GM12878 (cell line): ENCODE measurements at regions of chr3 and their contacts with region 1.

Region 1: DNA sequence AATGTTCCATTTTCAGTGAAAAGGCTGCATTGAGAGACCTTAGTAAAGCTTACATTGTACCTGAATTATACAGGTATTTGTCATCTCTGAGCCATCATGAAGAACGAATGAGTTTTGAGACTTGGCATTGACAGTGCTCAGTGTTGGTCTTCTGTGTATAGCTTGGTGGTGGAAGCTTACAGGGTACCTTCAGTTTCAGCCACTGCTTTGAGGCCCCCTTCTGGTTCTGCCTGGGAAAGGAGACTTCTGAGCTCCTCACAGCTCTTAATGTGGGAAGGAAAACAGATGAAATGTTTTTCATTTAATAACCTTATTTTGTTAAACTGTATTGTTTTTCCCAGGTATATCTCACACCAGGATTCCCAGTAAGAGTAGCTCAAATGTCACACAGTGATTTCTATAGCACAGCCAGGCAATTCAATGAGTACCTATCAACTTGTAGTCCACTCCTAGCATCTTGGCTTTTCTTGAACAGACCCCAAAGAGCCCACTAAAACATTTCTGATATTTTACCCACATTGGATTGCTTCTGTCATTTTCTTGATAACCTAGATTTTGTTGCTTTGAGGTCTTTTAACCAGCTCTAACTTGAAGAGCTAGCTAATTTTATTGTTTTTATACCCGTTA is 5.6 kb downstream of the SERPINI1 start:
- DNase-seq: no peak
- ATAC-seq: peak; percentile 97
- H3K4me3 ChIP-seq: no peak overlapping the region
- H3K27ac ChIP-seq: no peak overlapping the region
- H3K4me1 ChIP-seq: no peaks in the 10 kb centered on the region
- H3K27me3 ChIP-seq: no peaks in the 10 kb centered on the region
- CTCF ChIP-seq: peak; percentile 60 to 71 (median 69)
- EP300 ChIP-seq: no peak
- POLR2A ChIP-seq: no peak
- RAD21 ChIP-seq: peak; percentile 65

Region 2: DNA sequence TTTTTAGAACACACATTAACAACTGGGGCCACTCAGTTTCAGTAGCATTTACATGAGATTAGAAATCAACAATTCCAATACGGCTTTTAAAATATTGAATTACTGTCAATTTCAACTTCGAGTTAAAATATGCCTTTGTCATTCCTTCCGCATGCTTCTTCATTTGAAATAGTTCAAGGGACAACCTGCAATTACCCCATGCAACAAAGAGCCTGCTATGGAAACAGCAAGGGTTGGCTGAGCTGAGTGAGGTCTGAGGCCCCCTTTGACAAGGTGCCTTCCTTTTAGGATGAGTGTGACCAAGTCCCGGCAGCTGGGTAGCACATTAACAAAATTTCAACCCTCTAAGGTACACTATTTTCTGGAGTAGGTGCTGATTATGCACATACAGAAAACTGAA is 18.0 kb before region 1 on chr3:
- CTCF ChIA-PET with region 1: interaction called, 24 read pairs
- POLR2A ChIA-PET with region 1: interaction called, 3 read pairs
- RAD21 ChIA-PET with region 1: interaction called, 7 read pairs
- SMC1A ChIA-PET with region 1: interaction called, 9 read pairs
- in situ Hi-C with region 1: no loop called
- intact Hi-C with region 1: no loop called
- DNase-seq: no peak
- ATAC-seq: no peak
- H3K4me3 ChIP-seq: no peak overlapping the region
- H3K27ac ChIP-seq: no peak overlapping the region
- H3K4me1 ChIP-seq: peaks cover 10% of the 10 kb centered on the region
- H3K27me3 ChIP-seq: no peaks in the 10 kb centered on the region
- CTCF ChIP-seq: no peak
- EP300 ChIP-seq: no peak
- POLR2A ChIP-seq: no peak
- RAD21 ChIP-seq: no peak

Region 3: DNA sequence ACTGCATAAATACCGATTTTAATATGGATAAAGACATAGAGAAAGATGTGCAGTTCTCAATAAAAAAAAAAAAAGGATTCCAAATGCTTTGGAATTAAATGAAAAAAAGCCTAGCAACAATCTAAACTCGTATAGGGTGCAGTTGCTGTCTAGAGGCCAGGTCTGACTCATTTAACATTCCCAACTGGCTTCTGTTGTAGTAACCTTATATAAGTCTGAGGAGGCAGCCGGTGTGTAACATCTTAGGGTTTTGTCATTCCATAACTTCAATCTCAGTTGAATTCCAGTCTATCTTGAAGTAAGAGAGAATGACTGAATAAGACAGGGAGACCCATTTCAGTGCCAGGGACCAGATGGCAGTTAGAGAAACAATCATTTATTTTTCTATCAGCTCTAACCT is 12.9 kb before region 1 on chr3:
- CTCF ChIA-PET with region 1: interaction called, 24 read pairs
- POLR2A ChIA-PET with region 1: interaction called, 3 read pairs
- RAD21 ChIA-PET with region 1: interaction called, 7 read pairs
- SMC1A ChIA-PET with region 1: interaction called, 10 read pairs
- in situ Hi-C with region 1: no loop called
- intact Hi-C with region 1: no loop called
- DNase-seq: no peak
- ATAC-seq: peak; percentile 12
- H3K4me3 ChIP-seq: no peak overlapping the region
- H3K27ac ChIP-seq: no peak overlapping the region
- H3K4me1 ChIP-seq: peaks cover 12% of the 10 kb centered on the region
- H3K27me3 ChIP-seq: no peaks in the 10 kb centered on the region
- CTCF ChIP-seq: no peak
- EP300 ChIP-seq: no peak
- POLR2A ChIP-seq: no peak
- RAD21 ChIP-seq: no peak